ENCODE measurements at regions of chr9 and their contacts with region 1.

Region 1: DNA sequence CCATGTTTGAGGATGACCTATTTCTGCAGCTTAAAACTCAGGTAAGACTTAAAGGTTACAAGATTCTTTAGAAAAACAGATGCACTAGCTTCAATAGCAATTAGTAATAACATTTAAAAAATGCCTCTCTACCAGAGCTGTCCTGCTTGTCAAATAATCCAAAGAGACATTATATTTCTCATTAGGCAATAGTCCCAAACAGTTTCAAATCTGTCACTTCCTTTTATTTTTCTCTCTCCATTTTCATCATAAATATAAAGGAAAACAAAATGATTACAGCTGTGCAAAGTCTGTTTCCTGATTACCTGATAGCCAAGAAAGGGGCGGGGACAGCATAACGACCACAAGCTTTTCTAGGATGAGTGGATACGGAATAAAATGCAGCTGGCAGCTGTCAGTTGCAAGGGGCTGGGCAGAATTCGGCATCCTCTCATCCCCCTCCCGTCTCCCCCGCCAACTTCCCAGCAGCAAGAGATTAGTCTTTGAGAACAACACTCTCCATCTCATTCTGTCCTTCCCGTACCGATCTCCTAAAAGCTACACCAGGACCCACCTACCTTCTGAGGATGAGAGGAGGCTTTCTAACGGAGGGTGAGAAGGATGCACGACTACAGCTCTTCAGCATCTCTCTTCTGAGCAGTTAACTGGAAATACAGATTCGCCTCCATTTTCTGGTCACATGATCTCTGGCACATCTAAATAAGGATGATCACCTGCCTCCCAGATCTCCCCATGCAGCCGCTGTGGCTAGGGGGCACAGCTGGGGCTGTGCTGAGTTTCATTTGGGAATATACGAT is 72.5 kb upstream of the PCA3 start:
- DNase-seq: no peak
- H3K4me3 ChIP-seq: no peak overlapping the region
- CTCF ChIP-seq: no peak
- POLR2A ChIP-seq: no peak

Region 2: DNA sequence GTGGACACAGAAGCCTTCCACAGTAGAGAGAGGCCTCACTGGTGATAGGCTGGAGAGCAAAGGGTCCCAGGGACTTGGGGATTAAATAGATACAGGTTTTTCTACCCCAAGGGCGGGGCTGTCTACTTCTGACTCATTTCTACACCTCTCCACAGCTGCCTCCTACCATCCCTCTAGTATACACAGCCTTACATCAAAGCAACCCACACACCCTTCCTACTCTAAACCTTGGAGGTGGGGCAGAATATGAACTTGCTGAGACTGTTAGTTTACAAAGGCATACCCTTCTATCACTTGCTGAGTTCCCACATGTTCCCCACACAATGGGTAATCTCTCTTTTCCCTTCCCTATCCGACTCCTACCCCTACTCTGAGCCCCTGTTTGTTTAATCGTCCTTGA is 52.6 kb after region 1 on chr9:
- intact Hi-C with region 1: no loop called
- DNase-seq: no peak
- H3K4me3 ChIP-seq: no peak overlapping the region
- CTCF ChIP-seq: no peak
- POLR2A ChIP-seq: no peak

Region 3: GRCh38 chr9:76887003-76887821 is 195.5 kb after region 1 on chr9:
- intact Hi-C with region 1: no loop called
- DNase-seq: no peak
- H3K4me3 ChIP-seq: no peak overlapping the region
- CTCF ChIP-seq: no peak
- POLR2A ChIP-seq: no peak

Region 4: DNA sequence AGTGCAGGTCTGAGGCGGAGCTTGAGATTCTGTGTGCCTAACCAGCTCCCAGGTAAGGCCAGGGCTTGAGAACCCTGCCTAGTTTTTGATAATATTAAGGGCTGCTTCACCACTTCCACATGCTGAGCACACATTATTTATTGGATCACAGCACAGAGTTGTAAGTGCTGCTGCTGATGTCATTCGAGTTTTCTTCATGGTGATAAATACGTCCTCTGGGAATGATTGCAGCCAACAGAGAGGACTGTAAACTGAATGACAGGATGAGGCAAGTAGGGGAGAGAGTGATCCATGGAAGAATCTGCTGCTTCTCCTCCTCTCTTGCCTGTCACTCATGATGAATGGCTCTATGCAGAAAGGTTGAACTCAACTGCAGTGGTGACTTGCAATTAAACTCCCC is 407.7 kb after region 1 on chr9:
- intact Hi-C with region 1: loop called (anchors 5 kb)
- DNase-seq: no peak
- H3K4me3 ChIP-seq: no peak overlapping the region
- CTCF ChIP-seq: no peak
- POLR2A ChIP-seq: no peak